Caco-2 (cell line): ENCODE measurements at regions of chr11 and their contacts with region 1.

Region 1: DNA sequence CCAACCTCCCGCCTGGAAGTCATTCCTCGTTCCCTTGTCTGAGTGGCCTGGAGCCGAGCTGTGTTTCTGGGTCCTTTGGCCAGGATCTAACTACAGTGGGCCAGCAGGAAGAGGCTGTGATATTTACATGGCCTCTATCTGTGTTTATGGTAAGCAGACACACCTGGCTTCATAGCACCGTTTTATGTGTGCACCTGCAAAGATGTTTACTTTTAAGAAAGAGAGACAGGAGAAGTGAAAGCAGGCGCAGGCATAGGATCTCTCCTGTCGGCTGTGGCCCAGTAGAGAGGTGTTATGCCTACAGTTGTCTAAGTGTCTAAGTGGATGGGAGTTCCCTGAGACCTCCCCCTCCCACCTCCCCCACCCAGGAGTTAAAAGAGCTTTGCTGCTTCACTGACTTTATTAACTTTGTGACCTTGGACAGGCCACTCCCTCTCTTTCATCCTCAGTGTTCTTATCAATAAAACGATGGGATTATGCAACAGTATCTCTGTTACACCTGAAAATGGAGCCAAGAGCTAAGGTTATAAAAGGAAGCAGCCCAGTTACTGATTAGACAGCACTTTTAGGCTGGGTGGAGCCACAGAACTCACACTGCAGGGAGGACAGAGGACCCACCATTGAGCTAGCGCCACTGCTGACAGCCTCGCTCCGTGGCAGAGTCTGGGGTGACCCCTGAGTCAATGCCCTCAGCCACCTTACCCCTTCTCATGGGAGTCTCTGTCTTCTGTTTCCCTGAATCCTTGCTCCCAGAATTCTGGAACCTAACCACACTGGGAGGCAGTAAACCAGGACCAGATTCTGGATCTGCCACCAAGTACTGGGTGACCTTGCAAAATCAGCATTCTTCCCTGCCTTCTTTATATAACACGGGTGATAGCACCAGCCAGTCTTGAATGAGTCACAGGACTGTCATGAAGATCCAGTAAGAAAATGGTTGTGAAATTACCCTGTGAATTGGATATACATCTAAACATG is 22.0 kb downstream of the ST14 start:
- DNase-seq: peak; percentile 94 to 99
- H3K4me3 ChIP-seq: peak overlapping the region; percentile 32
- H3K4me3 Mint-ChIP-seq: peak overlapping the region; percentile 58
- H3K27ac Mint-ChIP-seq: peak overlapping the region; percentile 92
- H3K4me1 ChIP-seq: peaks cover 56% of the 10 kb centered on the region
- H3K4me1 Mint-ChIP-seq: peaks cover 56% of the 10 kb centered on the region
- H3K27me3 ChIP-seq: no peaks in the 10 kb centered on the region
- H3K27me3 Mint-ChIP-seq: no peaks in the 10 kb centered on the region
- CTCF ChIP-seq: peak in 1 of 2 experiments; percentile 8

Region 2: DNA sequence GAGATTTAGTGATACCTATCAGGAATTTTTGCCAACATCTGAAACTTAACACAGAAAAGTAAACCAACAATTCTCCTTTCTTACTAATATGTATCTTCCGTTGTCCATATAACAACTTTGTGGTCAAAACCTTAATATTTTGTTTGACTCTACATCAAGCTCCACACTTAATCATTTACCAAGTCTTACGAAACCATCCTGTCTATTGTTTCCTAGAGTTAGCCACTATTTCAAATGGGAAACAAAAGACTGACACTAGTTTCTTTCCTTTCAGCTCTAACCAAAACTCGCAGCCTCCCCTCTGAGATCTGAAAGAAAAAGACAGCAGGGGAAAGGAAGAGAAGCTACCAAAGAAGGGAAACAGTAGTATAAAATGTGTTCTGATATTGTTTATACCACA is 152.4 kb before region 1 on chr11:
- CTCF ChIA-PET with region 1: no interaction called
- POLR2A ChIA-PET with region 1: interaction called, 5 read pairs
- intact Hi-C with region 1: loop called (anchors 1 kb)
- DNase-seq: no peak
- H3K4me3 ChIP-seq: no peak overlapping the region
- H3K4me3 Mint-ChIP-seq: peak overlapping the region; percentile 10
- H3K27ac Mint-ChIP-seq: peak overlapping the region; percentile 53
- H3K4me1 ChIP-seq: peaks cover 66% of the 10 kb centered on the region
- H3K4me1 Mint-ChIP-seq: peaks cover 47% of the 10 kb centered on the region
- H3K27me3 ChIP-seq: no peaks in the 10 kb centered on the region
- H3K27me3 Mint-ChIP-seq: no peaks in the 10 kb centered on the region
- CTCF ChIP-seq: no peak

Region 3: GRCh38 chr11:130159657-130160497 is 21.7 kb before region 1 on chr11 and contains the start of gene ST14:
- CTCF ChIA-PET with region 1: interaction called, 19 read pairs
- POLR2A ChIA-PET with region 1: interaction called, 22 read pairs
- intact Hi-C with region 1: loop called (anchors 1 kb)
- DNase-seq: peak; percentile 88 to 92
- H3K4me3 ChIP-seq: peak within 1 kb of the TSS; percentile 52
- H3K4me3 Mint-ChIP-seq: peak within 1 kb of the TSS; percentile 72
- H3K27ac Mint-ChIP-seq: peak within 1 kb of the TSS; percentile 74
- H3K4me1 ChIP-seq: peaks cover 28% of the 10 kb centered on the region
- H3K4me1 Mint-ChIP-seq: peaks cover 37% of the 10 kb centered on the region
- H3K27me3 ChIP-seq: no peaks in the 10 kb centered on the region
- H3K27me3 Mint-ChIP-seq: no peaks in the 10 kb centered on the region
- CTCF ChIP-seq: peak in 1 of 2 experiments; percentile 22
- total RNA-seq, gene ST14: 298 and 304 TPM in 2 replicates